ENCODE measurements at regions of chr18 and their contacts with region 1.

Region 1: GRCh38 chr18:11654736-11655605 is 34.1 kb upstream of the GNAL start:
- DNase-seq: peak; percentile 49 to 67
- ATAC-seq: peak; percentile 63 to 81 (median 68)
- H3K4me3 ChIP-seq: no peak overlapping the region
- H3K27ac ChIP-seq: no peak overlapping the region
- H3K4me1 ChIP-seq: no peaks in the 10 kb centered on the region
- H3K27me3 ChIP-seq: peaks cover 0 to 19% (median 3%) of the 10 kb centered on the region in 3 donors
- CTCF ChIP-seq: peak; percentile 71

Region 2: DNA sequence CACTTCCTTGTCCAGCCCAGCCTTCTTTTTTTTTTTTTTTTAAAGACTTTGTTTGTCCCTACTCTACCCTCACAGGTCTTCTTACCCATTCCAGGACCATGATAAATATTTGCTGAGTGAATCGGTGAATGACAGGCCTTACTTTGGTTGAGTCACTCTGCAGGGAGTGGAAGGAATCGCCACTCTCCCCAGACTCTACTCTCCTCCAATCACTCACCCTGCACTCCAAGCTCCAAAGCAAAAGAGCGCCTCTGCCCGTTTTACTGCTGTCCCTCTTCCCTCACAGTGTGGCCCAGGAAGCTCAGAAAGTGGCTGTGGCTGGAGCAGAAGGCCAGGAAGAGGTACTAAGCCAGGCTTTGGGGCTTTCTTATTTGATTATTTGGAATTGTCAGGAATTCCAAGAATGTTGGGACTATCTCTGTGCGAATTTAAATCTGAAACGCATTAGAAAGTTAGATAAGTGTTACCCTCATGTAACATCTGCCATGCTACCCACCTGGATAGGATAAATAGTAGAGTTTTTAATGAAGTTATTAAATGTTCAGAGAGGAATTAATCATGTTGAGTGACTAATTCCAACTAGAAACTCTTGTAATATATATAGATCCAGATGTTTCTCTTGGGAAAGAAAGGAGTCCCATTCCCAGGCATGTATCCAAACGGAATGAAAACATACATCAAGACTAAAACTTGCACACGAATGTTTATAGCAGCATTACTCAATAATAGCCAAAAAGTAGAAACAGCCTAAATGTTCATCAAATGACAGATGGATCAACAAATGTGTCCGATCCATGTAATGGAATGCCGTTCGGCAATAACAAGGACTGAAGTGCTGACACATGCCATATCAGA is 153.3 kb after region 1 on chr18:
- intact Hi-C with region 1: no loop called
- DNase-seq: no peak
- ATAC-seq: no peak
- H3K4me3 ChIP-seq: no peak overlapping the region
- H3K27ac ChIP-seq: no peak overlapping the region
- H3K4me1 ChIP-seq: peaks cover 4% of the 10 kb centered on the region
- H3K27me3 ChIP-seq: no peaks in the 10 kb centered on the region
- CTCF ChIP-seq: no peak

Region 3: DNA sequence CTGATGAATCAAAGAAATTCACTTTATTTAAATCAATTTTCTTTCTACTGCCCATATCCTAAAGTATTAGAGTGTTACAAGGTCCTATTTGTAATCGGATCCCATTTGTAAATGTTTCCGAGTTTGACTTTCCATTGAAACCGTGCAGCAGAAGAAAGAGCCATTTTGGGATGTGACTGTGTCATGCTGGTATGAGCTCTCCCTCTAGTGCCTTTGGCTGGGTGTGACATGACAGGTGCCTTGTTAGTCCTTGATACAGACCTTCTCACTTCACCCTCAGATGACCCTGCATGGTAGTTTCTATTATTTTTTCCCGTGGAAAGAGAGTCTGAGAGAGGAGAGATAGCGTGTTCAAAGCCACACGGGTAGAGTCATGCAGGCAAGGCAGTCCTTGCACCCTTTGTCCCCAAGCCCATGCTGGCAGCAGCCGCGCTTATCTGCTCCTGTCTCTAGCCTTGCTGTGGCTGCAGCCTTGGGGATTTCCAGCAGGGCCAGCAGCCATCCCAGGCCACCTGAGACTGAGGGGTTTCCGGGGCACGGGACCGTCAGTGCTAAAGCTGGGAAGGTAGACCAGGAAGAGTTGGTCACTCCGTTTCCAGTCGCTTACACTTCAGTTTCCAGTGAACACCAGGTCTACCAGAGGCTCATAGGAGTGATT is 217.6 kb after region 1 on chr18:
- intact Hi-C with region 1: loop called (anchors 2 to 10 kb)
- DNase-seq: no peak
- ATAC-seq: peak; percentile 98 to 99 (median 98)
- H3K4me3 ChIP-seq: no peak overlapping the region
- H3K27ac ChIP-seq: peak overlapping the region; percentile 54
- H3K4me1 ChIP-seq: peaks cover 5% of the 10 kb centered on the region
- H3K27me3 ChIP-seq: no peaks in the 10 kb centered on the region
- CTCF ChIP-seq: peak; percentile 60

Measured in psoas muscle (tissue), 8 donors.